ENCODE measurements at regions of chr1 and their contacts with region 1.

Region 1: DNA sequence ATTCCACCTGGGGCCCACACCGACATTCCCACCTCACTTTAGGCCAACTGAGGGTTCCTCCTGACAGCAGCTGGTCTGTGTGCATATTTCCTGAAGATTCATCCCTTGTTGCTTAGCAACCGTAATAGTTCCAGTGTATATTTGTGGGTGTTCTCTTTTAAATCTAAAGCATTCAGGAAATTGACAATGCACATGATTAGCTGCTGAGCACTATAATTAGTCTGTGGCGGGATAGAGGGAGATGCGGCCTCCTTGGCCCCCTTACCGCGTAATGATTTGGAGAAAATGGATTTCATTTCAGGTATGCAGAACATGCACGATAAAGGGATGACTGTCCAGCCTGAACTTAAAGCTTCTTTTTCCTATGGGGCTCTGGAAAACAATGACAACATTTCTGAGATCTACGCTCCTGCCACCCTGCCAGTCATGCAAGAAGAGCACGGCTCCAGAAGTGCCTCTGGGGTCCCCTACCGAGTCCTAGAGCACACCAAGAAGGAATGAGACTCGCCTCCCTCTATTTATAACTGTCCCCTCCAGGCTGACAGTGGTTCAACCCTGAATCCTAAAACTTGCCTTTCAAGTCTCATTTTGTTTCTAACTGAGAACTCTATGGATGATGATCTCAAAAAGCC is 33.8 kb upstream of the RCAN3 start:
- DNase-seq: no peak
- ATAC-seq: no peak
- H3K4me3 Mint-ChIP-seq: no peak overlapping the region
- H3K27ac Mint-ChIP-seq: no peak overlapping the region
- H3K4me1 Mint-ChIP-seq: peaks cover 5% of the 10 kb centered on the region
- H3K27me3 Mint-ChIP-seq: no peaks in the 10 kb centered on the region
- CTCF ChIP-seq: no peak

Region 2: GRCh38 chr1:24108334-24109165 is 360.3 kb before region 1 on chr1:
- CTCF ChIA-PET with region 1: no interaction called
- POLR2A ChIA-PET with region 1: no interaction called
- intact Hi-C with region 1: no loop called
- DNase-seq: no peak
- ATAC-seq: no peak
- H3K4me3 Mint-ChIP-seq: no peak overlapping the region
- H3K27ac Mint-ChIP-seq: no peak overlapping the region
- H3K4me1 Mint-ChIP-seq: peaks cover 6% of the 10 kb centered on the region
- H3K27me3 Mint-ChIP-seq: peaks cover 13% of the 10 kb centered on the region
- CTCF ChIP-seq: no peak

Region 3: DNA sequence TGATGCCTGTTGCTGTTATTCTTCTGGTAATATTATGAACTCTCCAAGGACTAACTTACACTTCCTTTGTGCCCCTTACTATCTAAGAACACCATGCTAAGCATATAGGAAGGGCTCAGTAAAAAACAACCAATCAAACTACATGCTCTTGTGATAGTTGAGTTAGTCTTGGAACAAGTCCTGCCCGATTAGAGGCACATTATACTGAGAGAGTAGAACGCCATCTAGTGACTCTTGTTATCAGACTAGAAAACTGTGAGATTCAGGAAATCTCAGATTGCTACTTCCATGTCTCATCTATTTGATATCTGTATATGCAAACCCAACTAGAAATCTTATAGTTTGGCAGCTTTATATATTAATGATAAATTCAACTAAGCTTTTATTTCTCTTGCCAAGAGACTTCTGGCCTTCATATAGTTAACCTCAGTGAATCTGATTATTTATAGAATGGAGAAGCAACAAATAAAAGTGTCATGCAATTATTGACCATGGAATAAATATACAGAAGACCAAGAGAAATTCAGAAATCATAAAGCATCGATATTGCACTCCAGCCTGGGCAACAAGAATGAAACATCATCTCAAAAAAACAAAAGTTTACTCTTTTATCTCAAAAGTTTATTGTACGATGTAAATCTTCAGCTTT is 166.5 kb after region 1 on chr1:
- CTCF ChIA-PET with region 1: no interaction called
- POLR2A ChIA-PET with region 1: no interaction called
- intact Hi-C with region 1: loop called (anchors 1 kb)
- DNase-seq: no peak
- ATAC-seq: peak; percentile 69
- H3K4me3 Mint-ChIP-seq: no peak overlapping the region
- H3K27ac Mint-ChIP-seq: no peak overlapping the region
- H3K4me1 Mint-ChIP-seq: peaks cover 2% of the 10 kb centered on the region
- H3K27me3 Mint-ChIP-seq: peaks cover 2% of the 10 kb centered on the region
- CTCF ChIP-seq: no peak

Measured in activated B cell treated with CpG ODN at 0.5 μM for 24 hours (primary cell).